Mammary epithelial cell (primary cell): ENCODE measurements at regions of chr10 and their contacts with region 1.

Region 1: DNA sequence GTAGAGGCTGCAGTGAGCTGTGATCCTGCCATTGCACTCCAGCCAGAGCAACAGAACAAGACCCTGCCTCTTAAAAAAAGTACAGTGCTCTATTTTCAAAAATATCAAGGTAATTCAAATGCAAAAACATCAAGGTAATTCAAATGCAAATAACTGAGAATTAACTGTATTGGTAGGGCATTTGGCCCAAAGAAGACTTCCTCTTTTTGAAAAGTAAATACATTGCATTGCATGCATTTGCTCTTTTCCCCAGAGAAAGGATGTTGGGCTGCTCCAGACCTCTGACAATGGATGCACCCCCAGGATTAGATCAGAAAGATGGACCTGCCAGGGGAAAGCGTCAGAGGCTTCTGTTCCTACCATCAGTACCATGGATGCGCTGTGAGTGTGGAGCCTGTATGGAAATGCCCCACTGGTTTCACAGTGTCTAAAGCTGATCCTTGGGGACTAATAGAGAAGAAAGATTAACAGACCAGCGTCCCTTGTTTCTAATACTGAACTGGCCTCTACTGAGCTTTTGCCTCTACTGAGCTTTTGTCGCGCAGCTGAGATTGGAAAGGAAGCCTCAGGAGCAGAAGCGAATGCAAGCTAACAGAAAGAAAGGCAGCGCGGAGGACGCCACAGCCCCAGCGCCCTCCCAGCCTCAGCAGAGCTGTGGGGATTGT is 93.5 kb upstream of the LYZL2 start:
- DNase-seq: no peak
- H3K4me3 ChIP-seq: no peak overlapping the region
- H3K27ac ChIP-seq: no peak overlapping the region
- H3K4me1 ChIP-seq: peaks cover 3% of the 10 kb centered on the region
- H3K27me3 ChIP-seq: no peaks in the 10 kb centered on the region
- CTCF ChIP-seq: no peak

Region 2: GRCh38 chr10:30527623-30528428 is 195.3 kb before region 1 on chr10:
- CTCF ChIA-PET with region 1: no interaction called
- dilution Hi-C with region 1: no loop called
- in situ Hi-C with region 1: no loop called
- intact Hi-C with region 1: no loop called
- DNase-seq: no peak
- H3K4me3 ChIP-seq: no peak overlapping the region
- H3K27ac ChIP-seq: no peak overlapping the region
- H3K4me1 ChIP-seq: no peaks in the 10 kb centered on the region
- H3K27me3 ChIP-seq: no peaks in the 10 kb centered on the region
- CTCF ChIP-seq: no peak

Region 3: DNA sequence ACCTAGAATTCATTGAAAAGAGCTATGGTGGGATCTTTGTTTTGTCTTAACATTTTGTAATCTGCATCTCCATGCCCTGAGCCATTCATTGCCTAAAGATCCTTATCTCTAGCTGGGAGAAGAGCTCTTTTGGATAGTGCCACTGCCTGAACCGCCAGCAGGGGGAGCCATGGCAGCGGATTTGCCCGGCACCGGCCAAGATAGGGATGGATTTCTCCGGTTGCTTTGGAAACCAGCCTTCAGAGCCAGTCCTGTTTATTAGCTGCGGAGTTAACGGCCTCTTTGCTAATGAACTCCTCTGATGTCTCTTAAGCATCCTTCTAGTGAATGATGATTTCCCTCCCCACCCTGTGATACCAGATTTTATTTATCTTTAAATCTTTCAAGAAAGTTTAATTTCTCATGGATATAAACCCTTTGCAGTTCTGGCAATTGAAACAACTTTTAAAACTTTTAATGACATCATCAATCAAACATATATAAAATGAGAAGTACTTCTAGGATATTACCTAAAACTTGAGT is 35.3 kb before region 1 on chr10:
- CTCF ChIA-PET with region 1: no interaction called
- dilution Hi-C with region 1: no loop called
- in situ Hi-C with region 1: no loop called
- intact Hi-C with region 1: loop called (anchors 5 kb)
- DNase-seq: peak; percentile 65
- H3K4me3 ChIP-seq: no peak overlapping the region
- H3K27ac ChIP-seq: no peak overlapping the region
- H3K4me1 ChIP-seq: no peaks in the 10 kb centered on the region
- H3K27me3 ChIP-seq: no peaks in the 10 kb centered on the region
- CTCF ChIP-seq: peak; percentile 91 to 95

Region 4: GRCh38 chr10:31490858-31491504 is 767.9 kb after region 1 on chr10:
- CTCF ChIA-PET with region 1: no interaction called
- dilution Hi-C with region 1: no loop called
- in situ Hi-C with region 1: loop called in 1 of 2 experiments (anchors 25 kb)
- intact Hi-C with region 1: loop called (anchors 2 kb)
- DNase-seq: peak; percentile 29
- H3K4me3 ChIP-seq: no peak overlapping the region
- H3K27ac ChIP-seq: no peak overlapping the region
- H3K4me1 ChIP-seq: no peaks in the 10 kb centered on the region
- H3K27me3 ChIP-seq: peaks cover 5% of the 10 kb centered on the region
- CTCF ChIP-seq: peak; percentile 72 to 79